ENCODE measurements at regions of chr16 and their contacts with region 1.

Region 1: DNA sequence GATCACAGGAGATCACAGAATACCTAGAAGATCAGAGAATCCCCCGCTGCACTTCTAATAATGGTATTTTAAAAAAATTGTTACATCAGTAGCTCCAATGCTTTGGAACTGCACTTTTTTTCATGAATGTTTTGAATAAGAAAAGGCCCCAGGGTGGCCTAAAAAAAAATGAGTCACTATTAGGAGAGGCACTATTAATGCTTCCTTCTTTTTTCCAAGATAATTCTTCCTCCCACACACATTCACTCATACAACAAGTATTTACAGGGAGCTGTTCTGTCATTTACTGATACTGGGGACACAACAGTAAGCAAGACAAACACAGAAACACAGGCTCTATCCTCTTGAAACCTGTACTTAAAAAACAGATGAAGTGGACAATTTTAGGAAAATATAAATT is 675 bp upstream of the PDZD9 start:
- DNase-seq: peak in 1 of 4 experiments; percentile 20
- ATAC-seq: no peak
- H3K4me3 ChIP-seq: no peak overlapping the region
- H3K27ac ChIP-seq: no peak overlapping the region
- H3K4me1 ChIP-seq: peaks cover 5 to 6% of the 10 kb centered on the region in 2 experiments; a peak in 3 of 5 replicates
- H3K27me3 ChIP-seq: peaks cover 0 to 4% of the 10 kb centered on the region in 2 experiments; a peak in 2 of 5 replicates
- CTCF ChIP-seq: no peak
- EP300 ChIP-seq: no peak
- POLR2A ChIP-seq: no peak
- RAD21 ChIP-seq: no peak

Region 2: GRCh38 chr16:22077700-22078313 is 76.2 kb after region 1 on chr16:
- CTCF ChIA-PET with region 1: interaction called, 38 read pairs
- POLR2A ChIA-PET with region 1: interaction called, 9 read pairs
- in situ Hi-C with region 1: no loop called
- intact Hi-C with region 1: loop called (anchors 1 kb)
- DNase-seq: peak; percentile 68 to 74 (median 69)
- ATAC-seq: peak; percentile 86
- H3K4me3 ChIP-seq: no peak overlapping the region
- H3K27ac ChIP-seq: no peak overlapping the region
- H3K4me1 ChIP-seq: no peaks in the 10 kb centered on the region
- H3K27me3 ChIP-seq: no peaks in the 10 kb centered on the region
- CTCF ChIP-seq: peak; percentile 76 to 88 (median 85)
- EP300 ChIP-seq: no peak
- POLR2A ChIP-seq: no peak
- RAD21 ChIP-seq: peak; percentile 83 to 88

Region 3: DNA sequence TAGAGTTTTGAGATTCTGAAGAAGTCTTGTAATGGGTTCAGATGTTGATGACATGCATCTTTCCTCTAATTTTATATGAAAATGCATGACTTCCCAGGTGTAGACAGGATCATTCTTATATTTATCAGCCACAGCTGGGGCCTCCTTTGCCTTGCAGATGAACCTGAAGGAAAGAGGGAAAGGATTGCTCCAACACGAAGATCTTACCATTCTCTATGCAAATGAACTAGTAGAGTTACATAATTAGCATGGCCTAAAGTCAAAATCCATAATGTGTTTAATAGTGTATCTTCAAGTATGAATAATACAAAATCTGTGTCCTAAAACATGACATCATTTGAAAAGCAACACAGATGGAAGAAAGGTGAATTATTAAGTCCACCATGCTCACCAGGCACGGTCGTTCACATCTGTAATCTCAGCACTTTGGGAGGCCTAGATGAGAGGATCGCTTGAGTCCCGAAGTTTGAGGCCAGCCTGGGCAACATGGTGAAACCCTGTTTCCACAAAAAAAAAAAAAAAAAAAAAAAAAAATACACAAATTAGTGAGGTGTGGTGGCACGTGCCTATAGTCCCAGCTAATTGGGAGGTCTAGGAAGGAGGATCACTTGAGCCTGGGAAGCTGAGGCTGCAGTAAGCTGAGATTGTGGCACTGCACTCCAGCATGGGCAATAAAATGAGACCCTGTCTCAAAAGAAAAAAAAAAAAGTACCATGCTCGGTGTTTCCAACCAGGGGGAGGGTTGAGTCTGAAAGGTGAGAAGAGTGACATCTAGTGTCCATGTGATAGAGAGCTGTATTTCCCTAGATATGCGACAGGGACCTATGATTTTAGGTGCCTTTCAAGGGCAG is 97.0 kb after region 1 on chr16:
- CTCF ChIA-PET with region 1: interaction called, 13 read pairs
- POLR2A ChIA-PET with region 1: interaction called, 3 read pairs
- in situ Hi-C with region 1: loop called (anchors 5 kb)
- intact Hi-C with region 1: loop called (anchors 1 kb)
- DNase-seq: peak; percentile 47 to 72 (median 58)
- ATAC-seq: peak; percentile 98
- H3K4me3 ChIP-seq: no peak overlapping the region
- H3K27ac ChIP-seq: no peak overlapping the region
- H3K4me1 ChIP-seq: no peaks in the 10 kb centered on the region
- H3K27me3 ChIP-seq: no peaks in the 10 kb centered on the region; a peak in 4 of 5 replicates
- CTCF ChIP-seq: peak; percentile 80 to 91 (median 83)
- EP300 ChIP-seq: no peak
- POLR2A ChIP-seq: no peak
- RAD21 ChIP-seq: peak; percentile 36 to 80

Region 4: DNA sequence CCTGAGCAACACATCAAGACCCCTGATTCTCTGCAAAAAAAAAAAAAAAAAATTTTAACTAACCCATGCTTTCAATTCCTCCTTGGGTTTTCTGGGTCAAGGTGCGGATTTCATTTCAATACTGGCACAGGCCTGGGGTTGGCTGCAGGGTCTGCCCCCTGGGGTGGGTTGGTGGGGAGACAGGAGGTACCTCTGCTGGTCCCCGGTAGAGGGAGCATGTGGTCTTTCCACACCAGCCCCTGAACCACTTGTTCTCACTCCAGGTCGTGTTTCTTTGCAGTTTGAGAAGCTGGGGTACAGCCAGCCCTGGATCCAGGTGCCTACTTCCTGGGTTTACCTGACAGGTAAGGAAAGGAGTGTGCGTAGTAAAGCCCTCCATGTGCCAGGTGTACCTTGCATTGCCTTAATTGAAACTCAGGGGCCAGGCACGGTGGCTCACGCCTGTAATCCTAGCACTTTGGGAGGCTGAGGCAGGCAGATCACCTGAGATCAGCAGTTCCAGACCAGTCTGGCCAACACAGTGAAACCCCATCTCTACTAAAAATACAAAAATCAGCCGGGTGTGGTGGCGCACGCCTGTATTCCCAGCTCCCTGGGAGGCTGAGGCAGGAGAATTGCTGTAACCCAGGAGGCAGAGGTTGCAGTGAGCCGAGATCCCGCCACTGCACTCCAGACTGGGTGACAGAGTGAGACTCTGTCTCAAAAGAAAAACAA is 182.5 kb after region 1 on chr16:
- CTCF ChIA-PET with region 1: interaction called, 10 read pairs
- POLR2A ChIA-PET with region 1: interaction called, 3 read pairs
- in situ Hi-C with region 1: loop called (anchors 5 kb)
- intact Hi-C with region 1: loop called (anchors 1 kb)
- DNase-seq: peak; percentile 43 to 83 (median 74)
- ATAC-seq: peak; percentile 84
- H3K4me3 ChIP-seq: no peak overlapping the region
- H3K27ac ChIP-seq: no peak overlapping the region
- H3K4me1 ChIP-seq: peaks cover 0 to 3% of the 10 kb centered on the region in 2 experiments; a peak in 2 of 5 replicates
- H3K27me3 ChIP-seq: peaks cover 31 to 55% of the 10 kb centered on the region in 2 experiments; a peak in 4 of 5 replicates
- CTCF ChIP-seq: peak; percentile 66 to 92 (median 68)
- EP300 ChIP-seq: no peak
- POLR2A ChIP-seq: no peak
- RAD21 ChIP-seq: peak in 1 of 2 experiments; percentile 37; a peak in 2 of 4 replicates

Region 5: GRCh38 chr16:22240023-22240710 is 238.6 kb after region 1 on chr16:
- CTCF ChIA-PET with region 1: no interaction called
- POLR2A ChIA-PET with region 1: no interaction called
- in situ Hi-C with region 1: no loop called
- intact Hi-C with region 1: no loop called
- DNase-seq: no peak
- ATAC-seq: no peak
- H3K4me3 ChIP-seq: no peak overlapping the region
- H3K27ac ChIP-seq: no peak overlapping the region
- H3K4me1 ChIP-seq: no peaks in the 10 kb centered on the region; a peak in 1 of 5 replicates
- H3K27me3 ChIP-seq: no peaks in the 10 kb centered on the region
- CTCF ChIP-seq: no peak
- EP300 ChIP-seq: no peak
- POLR2A ChIP-seq: no peak
- RAD21 ChIP-seq: no peak

Region 6: DNA sequence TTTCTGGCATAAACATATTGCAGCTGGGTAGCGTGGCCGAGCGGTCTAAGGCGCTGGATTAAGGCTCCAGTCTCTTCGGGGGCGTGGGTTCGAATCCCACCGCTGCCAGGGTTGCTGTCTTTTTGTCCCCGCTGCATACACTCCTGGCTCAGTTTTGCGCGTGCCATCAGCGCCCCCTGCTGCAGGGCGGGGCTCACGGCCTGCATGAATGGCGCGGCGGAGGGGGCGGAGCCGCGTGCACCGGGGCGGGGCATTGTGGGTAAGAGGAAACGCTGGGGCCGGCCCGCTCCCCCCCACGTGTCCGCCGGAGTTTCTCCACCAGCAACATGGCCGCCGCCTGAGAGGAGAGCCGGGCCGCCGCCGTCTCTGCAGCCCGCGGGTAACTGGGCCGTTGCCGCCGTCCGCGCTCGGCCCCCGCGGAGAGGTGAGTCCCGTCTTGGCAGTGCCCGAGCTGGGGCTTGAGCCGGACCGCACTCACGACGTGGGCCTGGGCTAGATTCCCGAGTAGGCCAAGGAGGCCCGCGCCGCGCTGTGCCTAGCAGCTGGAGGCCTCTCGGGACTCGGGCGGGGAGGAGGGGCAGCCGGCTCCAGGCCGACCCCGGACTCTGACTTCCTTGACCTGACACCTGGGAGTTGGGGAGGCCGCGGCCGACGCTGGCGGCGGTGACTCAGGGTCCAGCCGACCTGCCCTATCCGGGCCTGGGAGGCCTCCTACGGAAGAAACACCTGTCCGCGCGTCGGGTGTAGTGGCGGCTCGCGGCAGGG is 295.7 kb after region 1 on chr16 and contains the start of gene POLR3E:
- CTCF ChIA-PET with region 1: no interaction called
- POLR2A ChIA-PET with region 1: no interaction called
- in situ Hi-C with region 1: no loop called
- intact Hi-C with region 1: loop called (anchors 5 kb)
- DNase-seq: peak; percentile 95 to 99 (median 96)
- ATAC-seq: peak; percentile 90
- H3K4me3 ChIP-seq: peak within 1 kb of the TSS; percentile 96
- H3K27ac ChIP-seq: peak within 1 kb of the TSS; percentile 89
- H3K4me1 ChIP-seq: peaks cover 15% of the 10 kb centered on the region in 2 experiments; a peak in 4 of 5 replicates
- H3K27me3 ChIP-seq: no peaks in the 10 kb centered on the region
- CTCF ChIP-seq: peak; percentile 87 to 98 (median 94)
- EP300 ChIP-seq: peak; percentile 76
- POLR2A ChIP-seq: peak; percentile 83
- RAD21 ChIP-seq: peak; percentile 99
- polyA plus RNA-seq, gene POLR3E: 17.7 to 25.3 TPM

Measured in K562 (cell line).